ENCODE measurements at regions of chr10 and their contacts with region 1.

Region 1: GRCh38 chr10:132463333-132464252 is 66.6 kb downstream of the PWWP2B start:
- DNase-seq: no peak
- H3K4me3 ChIP-seq: no peak overlapping the region
- H3K27ac ChIP-seq: no peak overlapping the region
- H3K27me3 ChIP-seq: no peaks in the 10 kb centered on the region
- CTCF ChIP-seq: peak; percentile 48

Region 2: GRCh38 chr10:132354356-132355094 is 109.1 kb before region 1 on chr10:
- in situ Hi-C with region 1: no loop called
- DNase-seq: no peak
- H3K4me3 ChIP-seq: no peak overlapping the region
- H3K27ac ChIP-seq: no peak overlapping the region
- H3K27me3 ChIP-seq: no peaks in the 10 kb centered on the region
- CTCF ChIP-seq: no peak

Region 3: GRCh38 chr10:132627666-132628531 is 164.3 kb after region 1 on chr10:
- in situ Hi-C with region 1: loop called (anchors 10 kb)
- DNase-seq: peak; percentile 26
- H3K4me3 ChIP-seq: no peak overlapping the region
- H3K27ac ChIP-seq: no peak overlapping the region
- H3K27me3 ChIP-seq: no peaks in the 10 kb centered on the region
- CTCF ChIP-seq: no peak

Measured in brain microvascular endothelial cell (primary cell).